ENCODE measurements at regions of chr1 and their contacts with region 1.

Region 1: GRCh38 chr1:202315576-202316168 is 26.1 kb downstream of the UBE2T start:
- DNase-seq: no peak
- H3K4me3 ChIP-seq: no peak overlapping the region
- CTCF ChIP-seq: peak; percentile 96

Region 2: GRCh38 chr1:201888282-201889089 is 427.2 kb before region 1 on chr1 and contains the start of gene SHISA4:
- CTCF ChIA-PET with region 1: no interaction called
- POLR2A ChIA-PET with region 1: no interaction called
- DNase-seq: no peak
- H3K4me3 ChIP-seq: peak within 1 kb of the TSS; percentile 74
- CTCF ChIP-seq: no peak

Region 3: GRCh38 chr1:202184750-202185460 is 130.8 kb before region 1 on chr1:
- CTCF ChIA-PET with region 1: interaction called, 479 read pairs
- POLR2A ChIA-PET with region 1: no interaction called
- DNase-seq: peak; percentile 12
- H3K4me3 ChIP-seq: no peak overlapping the region
- CTCF ChIP-seq: peak; percentile 94

Region 4: GRCh38 chr1:202210385-202210784 is 105.3 kb before region 1 on chr1:
- CTCF ChIA-PET with region 1: interaction called, 14 read pairs
- POLR2A ChIA-PET with region 1: no interaction called
- DNase-seq: no peak
- H3K4me3 ChIP-seq: no peak overlapping the region
- CTCF ChIP-seq: peak; percentile 3

Region 5: DNA sequence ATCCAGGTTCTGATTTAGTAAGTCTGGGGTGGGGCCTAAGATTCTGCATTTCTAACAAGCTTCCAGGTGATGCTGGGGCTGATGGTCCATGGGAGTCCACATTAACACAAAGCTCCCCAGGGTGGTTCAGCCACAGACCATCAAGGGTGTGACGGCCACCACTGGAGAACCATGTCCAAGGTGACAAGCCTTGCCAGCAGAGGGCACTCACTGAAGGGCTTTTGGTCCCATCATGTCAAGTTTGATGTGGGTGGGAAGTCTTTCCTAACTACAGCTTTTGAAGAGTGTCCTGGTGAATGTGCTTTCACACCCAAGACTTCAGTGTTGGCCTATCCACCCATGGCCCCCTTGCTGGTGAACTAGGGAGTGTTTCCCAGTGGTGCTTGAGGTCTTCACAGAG is 41.1 kb before region 1 on chr1:
- CTCF ChIA-PET with region 1: interaction called, 38 read pairs
- POLR2A ChIA-PET with region 1: no interaction called
- DNase-seq: no peak
- H3K4me3 ChIP-seq: no peak overlapping the region
- CTCF ChIP-seq: peak; percentile 66

Region 6: DNA sequence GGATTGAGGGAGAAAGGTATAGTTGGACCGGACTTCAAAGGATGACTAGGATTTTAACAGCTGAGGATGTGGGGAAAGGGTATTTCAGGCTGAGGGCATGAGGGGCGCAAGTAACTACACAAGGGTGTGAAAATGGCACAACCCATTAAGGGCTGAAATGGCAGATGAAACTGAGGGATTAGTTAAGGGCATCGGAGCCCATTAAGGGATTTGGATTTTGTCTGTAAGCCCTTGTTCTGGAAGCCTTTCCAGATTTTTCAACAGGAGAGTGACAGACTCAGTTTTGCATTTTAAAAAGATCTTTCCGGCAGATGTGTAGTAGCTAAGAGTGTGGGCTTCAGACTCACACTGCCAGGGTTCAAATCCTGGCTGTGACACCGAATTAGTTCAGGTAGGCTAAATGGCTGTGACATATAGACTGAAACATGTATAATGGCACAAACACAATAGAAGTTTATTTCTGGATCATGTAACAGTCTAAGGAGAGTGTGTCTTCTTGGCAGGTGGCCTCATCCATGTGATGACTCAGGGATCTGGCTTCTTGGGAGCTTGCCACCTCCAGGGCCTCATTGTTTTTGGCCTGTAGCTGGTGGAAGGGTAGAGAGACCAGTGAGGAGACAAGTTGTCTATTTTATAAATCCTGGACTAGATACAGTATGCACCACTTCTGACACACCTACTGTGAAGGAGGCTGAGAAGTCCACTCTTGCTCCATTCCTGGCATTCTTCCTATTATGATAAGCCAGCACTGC is 23.5 kb before region 1 on chr1:
- CTCF ChIA-PET with region 1: interaction called, 113 read pairs
- POLR2A ChIA-PET with region 1: no interaction called
- DNase-seq: peak; percentile 23
- H3K4me3 ChIP-seq: no peak overlapping the region
- CTCF ChIP-seq: no peak

Region 7: DNA sequence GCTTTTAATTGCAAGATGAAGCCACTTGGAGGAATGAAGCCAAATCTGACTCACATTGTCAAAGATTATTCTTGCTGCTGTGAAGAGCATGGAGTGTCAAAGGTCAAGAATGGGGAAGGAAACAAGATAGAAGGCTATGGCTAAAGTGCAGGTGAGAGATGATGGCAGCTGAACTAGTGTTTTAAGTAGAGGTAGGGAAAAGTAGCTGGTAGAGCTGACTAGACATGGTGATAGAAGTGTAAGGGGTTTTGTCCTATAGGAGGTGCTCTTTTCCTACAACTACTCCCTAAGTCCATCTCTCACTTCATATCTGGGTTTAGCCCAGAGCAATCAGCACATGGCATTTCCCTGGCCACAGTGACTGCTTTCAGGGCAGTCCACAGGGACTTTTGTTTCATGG is 14.2 kb after region 1 on chr1:
- CTCF ChIA-PET with region 1: interaction called, 55 read pairs
- POLR2A ChIA-PET with region 1: no interaction called
- DNase-seq: no peak
- H3K4me3 ChIP-seq: no peak overlapping the region
- CTCF ChIP-seq: no peak